Breast epithelium (tissue), 4 donors: ENCODE measurements at regions of chr4 and their contacts with region 1.

Region 1: GRCh38 chr4:8241895-8242696 is 27.5 kb upstream of the HTRA3 start:
- DNase-seq: peak; percentile 78 to 86
- H3K4me3 ChIP-seq: no peak overlapping the region
- H3K27ac ChIP-seq: peak overlapping the region; percentile 25 to 77
- H3K4me1 ChIP-seq: no peaks in the 10 kb centered on the region
- H3K27me3 ChIP-seq: no peaks in the 10 kb centered on the region
- CTCF ChIP-seq: peak; percentile 90 to 97 (median 95)
- POLR2A ChIP-seq: no peak

Region 2: GRCh38 chr4:8079031-8079885 is 162.8 kb before region 1 on chr4:
- intact Hi-C with region 1: no loop called
- DNase-seq: no peak
- H3K4me3 ChIP-seq: no peak overlapping the region
- H3K27ac ChIP-seq: no peak overlapping the region
- H3K4me1 ChIP-seq: no peaks in the 10 kb centered on the region
- H3K27me3 ChIP-seq: no peaks in the 10 kb centered on the region
- CTCF ChIP-seq: no peak
- POLR2A ChIP-seq: no peak

Region 3: GRCh38 chr4:8258552-8259212 is 16.6 kb after region 1 on chr4:
- intact Hi-C with region 1: loop called (anchors 1 kb)
- DNase-seq: no peak
- H3K4me3 ChIP-seq: no peak overlapping the region
- H3K27ac ChIP-seq: no peak overlapping the region
- H3K4me1 ChIP-seq: peaks cover 2 to 3% of the 10 kb centered on the region in 2 donors
- H3K27me3 ChIP-seq: no peaks in the 10 kb centered on the region
- CTCF ChIP-seq: no peak
- POLR2A ChIP-seq: no peak

Region 4: DNA sequence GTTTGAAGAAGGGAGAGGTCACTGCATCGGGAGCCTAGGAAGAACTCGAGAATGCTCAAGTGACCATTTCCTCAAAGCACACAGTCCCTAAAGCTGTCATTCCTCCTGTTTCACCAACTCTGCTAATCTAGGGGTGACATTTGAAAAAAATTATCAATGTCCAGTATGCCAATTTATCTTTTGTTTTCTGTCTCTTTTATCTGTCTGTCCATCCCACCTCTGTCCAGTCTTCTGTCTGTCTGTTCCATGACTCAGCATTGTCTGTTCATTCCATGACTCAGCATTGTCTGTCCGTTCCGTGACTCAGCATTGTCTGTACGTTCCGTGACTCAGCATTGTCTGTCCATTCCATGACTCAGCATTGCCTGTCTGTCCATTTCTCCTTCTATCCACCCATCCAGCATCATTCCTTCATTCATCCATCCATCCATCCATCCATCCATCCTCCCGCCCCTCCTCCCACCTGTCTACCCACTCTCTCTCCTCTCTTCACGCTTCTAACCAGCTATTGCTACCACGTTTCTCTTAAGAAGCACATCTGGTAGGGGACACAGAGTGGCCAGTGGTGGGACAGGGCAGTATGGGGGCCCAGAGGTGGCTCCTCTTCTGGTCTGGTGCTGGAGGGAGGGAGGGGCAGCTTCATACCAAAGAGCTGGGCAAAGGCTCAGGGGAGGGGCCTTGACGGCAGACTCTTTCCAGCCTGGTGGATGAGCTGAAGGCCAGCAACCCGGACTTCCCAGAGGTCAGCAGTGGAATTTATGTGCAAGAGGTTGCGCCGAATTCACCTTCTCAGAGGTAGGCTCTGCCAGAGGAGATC is 61.6 kb after region 1 on chr4:
- intact Hi-C with region 1: no loop called
- DNase-seq: peak in 1 of 2 donors; percentile 19
- H3K4me3 ChIP-seq: no peak overlapping the region
- H3K27ac ChIP-seq: no peak overlapping the region
- H3K4me1 ChIP-seq: peaks cover 4 to 7% of the 10 kb centered on the region in 2 donors
- H3K27me3 ChIP-seq: no peaks in the 10 kb centered on the region
- CTCF ChIP-seq: no peak
- POLR2A ChIP-seq: no peak

Region 5: GRCh38 chr4:8410641-8411271 is 168.7 kb after region 1 on chr4:
- intact Hi-C with region 1: loop called (anchors 10 kb)
- DNase-seq: no peak
- H3K4me3 ChIP-seq: no peak overlapping the region
- H3K27ac ChIP-seq: no peak overlapping the region
- H3K4me1 ChIP-seq: no peaks in the 10 kb centered on the region
- H3K27me3 ChIP-seq: no peaks in the 10 kb centered on the region
- CTCF ChIP-seq: peak in 1 of 3 donors; percentile 20
- POLR2A ChIP-seq: no peak

Region 6: DNA sequence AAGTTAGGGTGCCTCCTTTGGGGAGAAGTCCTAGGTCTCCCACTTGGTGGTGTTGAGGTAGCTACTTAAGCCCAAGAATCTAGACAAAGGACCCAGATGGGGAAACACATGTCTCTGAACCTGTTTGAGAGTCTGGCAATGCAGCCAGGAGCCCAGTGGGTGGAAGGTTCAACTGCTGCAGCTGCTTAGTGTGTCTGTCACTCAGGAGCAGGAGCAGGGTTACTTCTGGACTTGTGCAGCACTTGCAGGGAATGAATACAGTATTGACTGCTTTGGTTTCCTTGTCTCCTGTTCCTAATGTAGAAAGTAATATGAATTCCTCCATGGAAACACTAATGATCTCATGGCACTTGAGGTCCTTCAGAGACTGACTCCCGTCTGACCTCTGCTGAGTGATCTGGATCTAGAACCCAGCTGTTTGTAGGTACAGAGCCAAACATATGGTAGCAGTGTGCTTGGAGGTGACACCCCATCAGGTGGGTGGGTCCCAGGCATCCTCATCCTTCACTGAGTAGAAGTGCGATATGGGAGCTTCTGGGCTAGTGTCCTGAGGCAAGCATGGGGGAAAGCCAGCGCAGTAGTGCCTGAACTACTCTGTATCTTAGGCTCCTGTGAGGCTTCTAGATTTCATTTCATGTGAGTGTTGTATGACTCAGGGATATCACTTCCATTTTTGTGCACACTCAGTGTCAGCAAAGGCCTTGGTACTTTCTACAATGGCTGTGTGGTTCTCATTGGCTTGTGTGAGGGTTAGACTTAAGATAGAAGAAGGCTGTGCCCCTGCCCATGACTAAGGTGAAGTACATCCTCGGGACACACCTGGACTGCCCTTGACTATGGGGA is 1959.5 kb after region 1 on chr4:
- intact Hi-C with region 1: no loop called
- DNase-seq: no peak
- H3K4me3 ChIP-seq: no peak overlapping the region
- H3K27ac ChIP-seq: no peak overlapping the region
- H3K4me1 ChIP-seq: no peaks in the 10 kb centered on the region
- H3K27me3 ChIP-seq: no peaks in the 10 kb centered on the region
- CTCF ChIP-seq: no peak
- POLR2A ChIP-seq: no peak